Activated T-helper 2 cell treated with anti-CD3 and anti-CD28 coated beads, Interferon-gamma antibody, Interleukin-2, Interleukin-4, amounts not matched to agents 10 μg/mL and 5 μg/mL and 100 μg/mL, durations not matched to agents 14 hours and 24 hours and 36 hours (primary cell): ENCODE measurements at regions of chr12 and their contacts with region 1.

Region 1: GRCh38 chr12:92145731-92146496 is at the start of gene BTG1:
- DNase-seq: peak; percentile 100
- H3K4me3 Mint-ChIP-seq: peak within 1 kb of the TSS; percentile 98
- H3K27ac Mint-ChIP-seq: peak within 1 kb of the TSS; percentile 99
- H3K4me1 Mint-ChIP-seq: peaks cover 34% of the 10 kb centered on the region
- H3K27me3 Mint-ChIP-seq: no peaks in the 10 kb centered on the region
- total RNA-seq, gene BTG1: 67.8 and 71.7 TPM in 2 replicates

Region 2: GRCh38 chr12:91483471-91483985 is 662.4 kb before region 1 on chr12:
- intact Hi-C with region 1: no loop called
- DNase-seq: no peak
- H3K4me3 Mint-ChIP-seq: no peak overlapping the region
- H3K27ac Mint-ChIP-seq: no peak overlapping the region
- H3K4me1 Mint-ChIP-seq: no peaks in the 10 kb centered on the region
- H3K27me3 Mint-ChIP-seq: no peaks in the 10 kb centered on the region

Region 3: DNA sequence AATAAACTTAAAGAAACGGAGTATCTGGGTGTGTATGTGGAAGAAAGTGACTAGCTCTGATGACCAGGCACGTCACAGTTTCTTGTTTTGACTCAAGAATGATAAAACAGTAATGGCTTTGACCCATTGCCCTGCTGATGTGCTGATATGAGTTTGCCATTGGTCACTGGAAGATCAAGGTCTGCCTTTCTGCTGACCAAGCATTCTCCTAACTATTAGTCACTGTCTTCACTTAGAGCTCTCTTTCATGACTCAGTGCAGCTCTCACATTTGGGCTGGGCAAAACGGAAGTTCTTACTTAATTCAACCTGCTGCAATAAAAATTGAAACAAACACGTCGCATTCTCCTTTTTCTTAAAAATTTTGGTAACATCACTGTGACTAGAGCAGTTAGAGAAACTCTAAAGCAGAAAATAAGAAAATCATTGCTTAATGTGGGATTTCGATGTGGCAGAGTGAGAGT is 366.9 kb before region 1 on chr12:
- intact Hi-C with region 1: loop called (anchors 5 kb)
- DNase-seq: peak; percentile 17
- H3K4me3 Mint-ChIP-seq: peak overlapping the region; percentile 62
- H3K27ac Mint-ChIP-seq: peak overlapping the region; percentile 70
- H3K4me1 Mint-ChIP-seq: peaks cover 24% of the 10 kb centered on the region
- H3K27me3 Mint-ChIP-seq: peaks cover 4% of the 10 kb centered on the region

Region 4: DNA sequence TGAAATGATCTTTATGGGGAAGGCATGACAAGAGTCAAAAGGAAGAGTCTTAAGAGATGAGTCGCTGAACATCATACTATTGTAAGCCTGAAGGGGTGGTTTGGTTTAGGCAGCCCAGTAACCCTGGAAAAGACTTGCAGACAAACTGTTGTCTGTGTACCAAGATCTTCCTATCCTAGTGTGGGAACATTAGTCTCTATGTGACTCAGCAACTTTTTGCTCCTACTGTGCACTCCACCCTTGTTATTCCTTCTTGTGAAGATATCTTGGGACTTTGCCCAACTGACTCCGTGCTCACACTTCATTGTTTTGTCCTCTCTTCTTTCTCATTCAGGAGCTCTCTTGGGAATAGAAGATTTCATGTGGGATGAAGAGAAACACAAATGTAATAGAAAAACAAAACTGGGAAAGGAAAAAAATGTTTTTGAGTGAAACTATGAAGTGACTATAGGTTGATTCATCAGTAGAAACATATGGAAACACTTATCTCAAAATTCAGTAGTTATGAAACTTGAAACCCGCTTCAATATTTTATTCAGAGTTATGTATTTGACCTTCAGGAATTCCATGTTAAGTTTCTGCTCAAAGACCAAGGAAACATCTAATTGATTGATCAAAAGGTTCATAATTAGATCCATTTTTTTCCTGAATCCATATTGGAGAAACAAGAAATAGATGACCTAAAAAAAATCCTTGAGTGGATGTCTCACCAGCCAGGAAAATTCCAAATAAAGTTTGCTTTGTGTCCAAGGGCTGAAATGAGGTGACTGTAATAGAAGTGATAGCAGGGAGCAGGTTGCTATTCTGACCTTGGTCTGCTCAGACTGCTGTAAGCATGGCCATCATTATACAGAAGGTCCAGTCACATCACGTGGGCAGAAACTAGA is 67.5 kb before region 1 on chr12:
- intact Hi-C with region 1: loop called (anchors 2 kb)
- DNase-seq: no peak
- H3K4me3 Mint-ChIP-seq: no peak overlapping the region
- H3K27ac Mint-ChIP-seq: peak overlapping the region; percentile 76
- H3K4me1 Mint-ChIP-seq: peaks cover 50% of the 10 kb centered on the region
- H3K27me3 Mint-ChIP-seq: no peaks in the 10 kb centered on the region

Region 5: DNA sequence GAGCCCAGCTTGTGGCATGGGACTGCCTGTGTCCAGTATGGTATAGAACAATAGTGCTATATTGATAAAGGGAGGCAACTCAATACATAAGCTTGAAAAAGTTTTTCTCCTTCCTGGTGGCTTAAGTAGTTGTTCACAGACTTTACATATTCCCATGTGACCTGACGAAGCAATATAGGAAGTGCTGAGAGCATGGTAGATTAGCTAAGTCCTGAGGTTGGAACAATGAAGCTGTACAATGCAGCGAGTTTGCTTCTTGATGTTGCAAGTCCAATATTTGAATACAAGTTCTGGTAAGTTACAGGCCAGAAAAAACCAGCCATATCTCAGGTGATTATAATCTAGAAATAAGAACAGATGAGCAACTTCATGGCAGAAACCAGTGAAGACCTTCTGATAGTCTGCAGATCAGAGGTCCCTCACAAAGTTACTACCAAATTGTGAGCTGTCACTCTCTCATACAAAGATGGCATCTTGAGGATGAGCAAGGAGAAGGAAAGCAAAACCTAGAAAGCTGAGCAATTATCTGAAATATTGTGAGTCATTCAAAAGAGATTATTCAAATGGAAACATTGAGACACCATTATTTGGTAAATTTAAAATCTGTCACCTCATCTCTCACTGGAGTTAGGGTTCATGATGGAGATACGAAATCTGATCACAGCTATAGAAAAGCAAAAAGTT is 72.6 kb after region 1 on chr12:
- intact Hi-C with region 1: loop called (anchors 1 kb)
- DNase-seq: no peak
- H3K4me3 Mint-ChIP-seq: no peak overlapping the region
- H3K27ac Mint-ChIP-seq: peak overlapping the region; percentile 66
- H3K4me1 Mint-ChIP-seq: peaks cover 32% of the 10 kb centered on the region
- H3K27me3 Mint-ChIP-seq: no peaks in the 10 kb centered on the region

Region 6: DNA sequence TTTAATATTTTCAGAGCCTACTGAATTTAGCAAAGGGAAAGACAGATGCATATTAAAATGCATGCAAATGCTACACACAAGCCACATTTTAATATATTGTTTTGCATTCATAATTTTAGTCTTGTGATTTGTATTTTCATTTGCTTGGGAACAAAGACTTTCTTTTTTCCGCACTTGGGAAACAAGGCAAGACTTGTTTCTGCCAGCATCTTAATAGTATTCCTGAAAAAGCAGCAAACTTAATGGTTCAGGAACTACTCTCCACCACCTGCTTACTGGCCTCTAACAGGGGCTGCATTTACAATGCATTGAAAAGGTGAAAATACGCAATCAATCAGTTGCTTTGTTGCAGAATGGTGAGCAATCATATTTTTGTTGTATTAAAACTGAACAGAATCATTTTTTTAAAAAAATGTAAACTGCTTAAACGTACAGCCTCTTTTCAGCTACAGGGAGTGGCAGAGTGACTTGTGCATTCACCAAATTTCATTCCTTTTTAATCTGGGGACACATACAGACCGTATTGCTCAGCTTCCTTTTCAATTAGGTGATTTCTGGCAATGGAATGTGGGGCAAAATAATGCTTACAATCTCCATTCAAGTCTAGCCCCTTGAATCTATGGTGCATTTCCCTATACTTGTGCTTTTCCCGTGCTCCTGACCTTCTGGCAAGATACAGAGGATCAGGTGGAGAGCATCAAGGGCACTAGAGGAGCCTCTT is 143.9 kb after region 1 on chr12:
- intact Hi-C with region 1: no loop called
- DNase-seq: no peak
- H3K4me3 Mint-ChIP-seq: no peak overlapping the region
- H3K27ac Mint-ChIP-seq: no peak overlapping the region
- H3K4me1 Mint-ChIP-seq: peaks cover 5% of the 10 kb centered on the region
- H3K27me3 Mint-ChIP-seq: no peaks in the 10 kb centered on the region

Region 7: GRCh38 chr12:92445253-92446082 is 299.6 kb after region 1 on chr12:
- intact Hi-C with region 1: no loop called
- DNase-seq: no peak
- H3K4me3 Mint-ChIP-seq: no peak overlapping the region
- H3K27ac Mint-ChIP-seq: no peak overlapping the region
- H3K4me1 Mint-ChIP-seq: peaks cover 8% of the 10 kb centered on the region
- H3K27me3 Mint-ChIP-seq: no peaks in the 10 kb centered on the region

Region 8: GRCh38 chr12:92469837-92470236 is 323.9 kb after region 1 on chr12:
- intact Hi-C with region 1: loop called (anchors 10 kb)
- DNase-seq: no peak
- H3K4me3 Mint-ChIP-seq: no peak overlapping the region
- H3K27ac Mint-ChIP-seq: no peak overlapping the region
- H3K4me1 Mint-ChIP-seq: peaks cover 23% of the 10 kb centered on the region
- H3K27me3 Mint-ChIP-seq: no peaks in the 10 kb centered on the region

Region 9: GRCh38 chr12:92570056-92570753 is 424.3 kb after region 1 on chr12:
- intact Hi-C with region 1: loop called (anchors 2 kb)
- DNase-seq: no peak
- H3K4me3 Mint-ChIP-seq: no peak overlapping the region
- H3K27ac Mint-ChIP-seq: no peak overlapping the region
- H3K4me1 Mint-ChIP-seq: peaks cover 20% of the 10 kb centered on the region
- H3K27me3 Mint-ChIP-seq: no peaks in the 10 kb centered on the region

Region 10: GRCh38 chr12:92928962-92929915 is 783.3 kb after region 1 on chr12 and contains the start of gene EEA1:
- intact Hi-C with region 1: loop called (anchors 5 kb)
- DNase-seq: peak; percentile 93
- H3K4me3 Mint-ChIP-seq: peak within 1 kb of the TSS; percentile 88
- H3K27ac Mint-ChIP-seq: peak within 1 kb of the TSS; percentile 95
- H3K4me1 Mint-ChIP-seq: peaks cover 27% of the 10 kb centered on the region
- H3K27me3 Mint-ChIP-seq: peaks cover 2% of the 10 kb centered on the region
- total RNA-seq, gene EEA1: 30.5 and 31.9 TPM in 2 replicates